GM10248 (cell line): ENCODE measurements at regions of chr1 and their contacts with region 1.

Region 1: GRCh38 chr1:93846211-93846991 is 32.6 kb downstream of the DNTTIP2 start:
- DNase-seq: peak; percentile 87
- CTCF ChIP-seq: peak; percentile 28

Region 2: DNA sequence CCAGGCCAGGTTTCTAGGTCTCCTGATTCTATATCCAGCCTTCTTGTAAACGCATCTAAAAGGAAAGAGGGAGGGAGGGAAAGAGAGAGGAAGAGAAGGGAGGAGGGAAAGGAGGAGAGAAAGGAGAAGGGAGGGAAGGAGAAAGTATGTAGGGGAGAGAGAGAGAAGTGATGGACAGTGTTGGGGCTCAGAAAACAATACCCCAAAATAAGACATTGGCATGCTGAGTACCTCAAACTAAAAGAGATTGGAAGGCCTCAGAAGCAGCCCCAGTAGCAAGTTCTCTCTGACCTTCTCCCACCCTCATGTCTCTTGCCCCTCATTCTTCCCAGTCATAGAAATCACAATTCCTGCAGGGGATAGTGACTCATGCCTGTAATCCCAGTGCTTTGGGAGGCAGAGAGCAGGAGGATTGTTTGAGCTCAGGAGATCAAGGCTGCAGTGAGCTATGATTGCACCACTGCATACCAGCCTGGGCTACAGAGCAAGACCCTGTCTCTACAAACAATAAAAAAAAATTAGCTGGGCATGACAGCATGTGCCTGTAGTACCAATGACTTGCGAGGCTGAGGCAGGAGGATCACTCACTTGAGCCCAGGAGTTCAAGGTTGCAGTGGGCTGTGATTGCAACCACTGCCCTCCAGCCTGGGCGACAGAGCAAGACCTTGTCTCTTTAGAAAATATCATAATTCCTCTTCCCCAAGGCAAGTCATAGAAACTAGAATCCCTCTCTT is 18.6 kb before region 1 on chr1:
- CTCF ChIA-PET with region 1: interaction called, 10 read pairs
- POLR2A ChIA-PET with region 1: no interaction called
- DNase-seq: no peak
- CTCF ChIP-seq: no peak

Region 3: GRCh38 chr1:93865253-93865652 is 18.9 kb after region 1 on chr1:
- CTCF ChIA-PET with region 1: interaction called, 11 read pairs
- POLR2A ChIA-PET with region 1: no interaction called
- DNase-seq: no peak
- CTCF ChIP-seq: no peak